Astrocyte of the cerebellum (primary cell): ENCODE measurements at regions of chr17 and their contacts with region 1.

Region 1: GRCh38 chr17:17382971-17383370 is 79.8 kb downstream of the NT5M start:
- DNase-seq: no peak
- H3K4me3 ChIP-seq: no peak overlapping the region
- CTCF ChIP-seq: no peak

Region 2: GRCh38 chr17:17455173-17455572 is 72.2 kb after region 1 on chr17:
- in situ Hi-C with region 1: loop called (anchors 5 kb)
- DNase-seq: no peak
- H3K4me3 ChIP-seq: no peak overlapping the region
- CTCF ChIP-seq: no peak

Region 3: GRCh38 chr17:17484451-17484899 is 101.5 kb after region 1 on chr17:
- in situ Hi-C with region 1: loop called (anchors 5 kb)
- DNase-seq: no peak
- H3K4me3 ChIP-seq: no peak overlapping the region
- CTCF ChIP-seq: no peak